Cardiac septum (tissue), 1 donor: ENCODE measurements at regions of chr1 and their contacts with region 1.

Region 1: DNA sequence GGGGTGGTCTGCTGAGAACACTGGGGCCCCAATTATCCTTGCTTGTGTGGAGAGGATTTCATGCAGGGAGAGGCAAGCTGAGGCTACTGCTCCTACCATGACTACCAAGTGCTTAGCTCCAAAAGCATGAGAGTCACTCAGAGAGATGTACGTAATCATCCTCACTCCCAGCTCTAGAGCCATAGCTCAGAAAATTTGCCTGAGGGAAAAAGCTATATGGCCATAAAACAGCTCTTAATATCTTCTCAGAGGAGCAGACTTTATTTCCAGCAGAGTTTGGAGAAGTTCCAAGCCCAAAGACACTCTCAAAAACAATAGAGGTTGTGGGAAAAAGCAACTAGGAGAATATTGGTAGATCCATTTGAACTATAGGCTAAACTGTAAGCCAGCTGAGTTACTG is 106.4 kb upstream of the PBX1 start:
- DNase-seq: no peak

Region 2: DNA sequence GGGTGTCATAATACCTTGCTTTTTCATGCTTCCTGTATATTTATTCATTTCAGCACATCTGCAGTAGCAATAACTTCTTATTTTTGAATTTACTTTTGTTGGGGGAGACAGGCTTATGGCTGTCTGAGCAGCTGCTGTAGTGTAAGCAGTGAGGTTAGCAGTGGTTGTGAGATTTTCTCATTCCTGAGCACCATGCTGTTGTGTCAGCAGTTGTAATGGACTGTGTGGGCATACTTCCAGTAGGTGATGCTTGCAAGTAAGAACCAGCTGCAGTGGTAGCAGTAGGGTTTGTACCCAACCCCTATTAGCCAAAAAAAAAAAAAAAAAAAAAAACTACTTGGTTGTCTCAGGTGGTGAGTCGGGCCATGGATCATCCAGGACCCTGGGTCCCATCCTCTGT is 819.2 kb before region 1 on chr1:
- intact Hi-C with region 1: loop called (anchors 5 kb)
- DNase-seq: no peak